Heart left ventricle (tissue), 16 donors: ENCODE measurements at regions of chr12 and their contacts with region 1.

Region 1: GRCh38 chr12:94525951-94526350 is 66.3 kb upstream of the CEP83 start:
- DNase-seq: no peak
- ATAC-seq: no peak
- H3K4me3 ChIP-seq: no peak overlapping the region
- H3K27ac ChIP-seq: no peak overlapping the region
- H3K4me1 ChIP-seq: no peaks in the 10 kb centered on the region
- H3K27me3 ChIP-seq: no peaks in the 10 kb centered on the region
- CTCF ChIP-seq: no peak
- POLR2A ChIP-seq: no peak

Region 2: DNA sequence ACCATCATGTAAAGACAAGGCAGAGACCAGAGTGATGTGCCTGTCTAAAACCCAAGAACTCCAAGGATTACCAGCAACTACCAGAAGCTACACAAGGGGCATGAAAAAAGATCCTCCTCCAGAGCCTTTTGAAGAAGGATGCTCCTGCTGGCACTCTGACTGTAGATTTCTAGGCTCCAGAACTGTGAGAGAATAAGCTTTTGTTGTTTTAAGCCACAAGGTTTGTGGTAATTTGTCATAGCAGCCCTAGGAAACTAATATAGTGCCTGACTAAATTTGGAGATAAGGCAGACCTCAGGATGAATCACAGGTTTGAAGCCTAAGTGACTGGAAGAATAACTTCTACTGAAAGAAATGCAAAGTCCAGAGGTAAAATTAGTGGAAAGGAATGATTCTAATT is 199.2 kb before region 1 on chr12:
- intact Hi-C with region 1: loop called in 6 of 10 experiments (anchors 5 to 10 kb)
- DNase-seq: no peak
- ATAC-seq: no peak
- H3K4me3 ChIP-seq: no peak overlapping the region
- H3K27ac ChIP-seq: no peak overlapping the region
- H3K4me1 ChIP-seq: peaks cover 0 to 2% (median 0%) of the 10 kb centered on the region in 12 donors
- H3K27me3 ChIP-seq: no peaks in the 10 kb centered on the region
- CTCF ChIP-seq: no peak
- POLR2A ChIP-seq: no peak

Region 3: GRCh38 chr12:94481734-94482133 is 44.2 kb before region 1 on chr12:
- intact Hi-C with region 1: no loop called
- DNase-seq: no peak
- ATAC-seq: no peak
- H3K4me3 ChIP-seq: no peak overlapping the region
- H3K27ac ChIP-seq: no peak overlapping the region
- H3K4me1 ChIP-seq: no peaks in the 10 kb centered on the region
- H3K27me3 ChIP-seq: peaks cover 0 to 9% (median 0%) of the 10 kb centered on the region in 9 donors
- CTCF ChIP-seq: no peak
- POLR2A ChIP-seq: no peak